OCI-LY7 (cell line): ENCODE measurements at regions of chr5 and their contacts with region 1.

Region 1: DNA sequence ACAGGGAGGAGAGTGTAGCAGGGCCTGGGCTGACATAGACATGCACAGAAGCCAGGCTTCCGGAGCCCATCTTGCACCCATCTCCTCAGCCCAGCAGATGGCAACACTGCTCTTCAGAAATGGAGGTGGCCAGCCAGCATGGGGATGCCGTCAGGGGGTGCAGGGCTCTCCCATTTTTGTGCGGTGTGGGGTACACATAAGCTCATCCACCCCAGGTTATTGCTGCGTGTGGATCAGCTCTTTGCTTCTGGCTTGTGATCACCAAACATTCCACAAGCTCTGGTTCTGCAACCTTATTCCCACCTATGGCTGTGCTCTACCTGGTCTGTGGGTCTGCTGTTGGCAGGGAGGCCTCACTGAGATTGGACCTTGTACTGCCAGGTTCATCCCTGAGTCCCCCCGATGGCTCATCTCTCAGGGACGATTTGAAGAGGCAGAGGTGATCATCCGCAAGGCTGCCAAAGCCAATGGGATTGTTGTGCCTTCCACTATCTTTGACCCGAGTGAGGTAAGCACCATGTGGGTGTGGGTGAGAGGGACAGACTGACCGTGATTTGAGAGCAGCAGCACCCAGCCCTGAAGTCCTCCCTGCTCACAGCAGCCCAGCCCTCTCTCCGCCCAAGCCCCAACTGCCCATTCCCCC is 17.3 kb downstream of the SLC22A5 start:
- DNase-seq: peak; percentile 86
- H3K4me3 ChIP-seq: no peak overlapping the region
- H3K27ac ChIP-seq: no peak overlapping the region
- H3K4me1 ChIP-seq: peaks cover 19% of the 10 kb centered on the region
- CTCF ChIP-seq: peak; percentile 94

Region 2: DNA sequence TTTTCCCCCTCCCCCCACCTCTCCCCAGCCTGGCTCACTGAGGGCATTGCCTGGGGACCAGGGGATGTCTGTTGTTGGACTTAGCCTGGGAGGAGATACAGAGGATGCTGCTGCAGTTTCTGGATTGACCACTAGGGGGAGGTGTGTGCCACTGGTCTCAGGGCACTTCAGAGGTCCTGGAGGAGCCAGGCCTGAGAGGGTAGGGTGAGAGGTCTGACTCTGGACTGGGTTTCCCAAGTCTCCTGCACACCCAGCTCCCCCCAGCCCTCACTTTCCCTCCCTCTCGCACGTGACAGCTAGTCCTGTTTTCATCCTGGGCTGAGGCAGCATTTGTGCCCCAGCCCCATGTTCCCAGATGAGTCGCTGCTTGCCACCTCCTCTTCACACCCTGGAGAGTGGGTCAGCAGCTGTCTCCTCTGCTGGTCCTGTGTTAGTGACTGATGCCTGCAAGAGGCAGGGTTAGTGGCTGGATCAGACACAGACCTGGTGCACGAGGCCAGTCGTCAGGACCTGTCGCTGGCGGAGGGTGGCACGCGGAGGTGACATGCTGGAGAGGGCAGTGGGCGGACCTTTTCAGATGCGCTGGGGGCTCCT is 321.9 kb before region 1 on chr5:
- CTCF ChIA-PET with region 1: no interaction called
- POLR2A ChIA-PET with region 1: no interaction called
- intact Hi-C with region 1: loop called (anchors 1 kb)
- DNase-seq: peak; percentile 80
- H3K4me3 ChIP-seq: no peak overlapping the region
- H3K27ac ChIP-seq: no peak overlapping the region
- H3K4me1 ChIP-seq: no peaks in the 10 kb centered on the region
- CTCF ChIP-seq: peak; percentile 87

Region 3: GRCh38 chr5:132410451-132411381 is 24.0 kb after region 1 on chr5:
- CTCF ChIA-PET with region 1: interaction called, 4 read pairs
- POLR2A ChIA-PET with region 1: interaction called, 7 read pairs
- intact Hi-C with region 1: loop called (anchors 1 kb)
- DNase-seq: peak; percentile 92
- H3K4me3 ChIP-seq: peak overlapping the region; percentile 75
- H3K27ac ChIP-seq: peak overlapping the region; percentile 86
- H3K4me1 ChIP-seq: peaks cover 64% of the 10 kb centered on the region
- CTCF ChIP-seq: peak; percentile 78

Region 4: GRCh38 chr5:132446669-132447068 is 59.9 kb after region 1 on chr5:
- CTCF ChIA-PET with region 1: no interaction called
- POLR2A ChIA-PET with region 1: no interaction called
- intact Hi-C with region 1: no loop called
- DNase-seq: no peak
- H3K4me3 ChIP-seq: no peak overlapping the region
- H3K27ac ChIP-seq: no peak overlapping the region
- H3K4me1 ChIP-seq: peaks cover 9% of the 10 kb centered on the region
- CTCF ChIP-seq: no peak

Region 5: GRCh38 chr5:132653716-132654115 is 267.0 kb after region 1 on chr5:
- CTCF ChIA-PET with region 1: no interaction called
- POLR2A ChIA-PET with region 1: no interaction called
- intact Hi-C with region 1: loop called (anchors 5 kb)
- DNase-seq: no peak
- H3K4me3 ChIP-seq: no peak overlapping the region
- H3K27ac ChIP-seq: no peak overlapping the region
- H3K4me1 ChIP-seq: no peaks in the 10 kb centered on the region
- CTCF ChIP-seq: no peak

Region 6: DNA sequence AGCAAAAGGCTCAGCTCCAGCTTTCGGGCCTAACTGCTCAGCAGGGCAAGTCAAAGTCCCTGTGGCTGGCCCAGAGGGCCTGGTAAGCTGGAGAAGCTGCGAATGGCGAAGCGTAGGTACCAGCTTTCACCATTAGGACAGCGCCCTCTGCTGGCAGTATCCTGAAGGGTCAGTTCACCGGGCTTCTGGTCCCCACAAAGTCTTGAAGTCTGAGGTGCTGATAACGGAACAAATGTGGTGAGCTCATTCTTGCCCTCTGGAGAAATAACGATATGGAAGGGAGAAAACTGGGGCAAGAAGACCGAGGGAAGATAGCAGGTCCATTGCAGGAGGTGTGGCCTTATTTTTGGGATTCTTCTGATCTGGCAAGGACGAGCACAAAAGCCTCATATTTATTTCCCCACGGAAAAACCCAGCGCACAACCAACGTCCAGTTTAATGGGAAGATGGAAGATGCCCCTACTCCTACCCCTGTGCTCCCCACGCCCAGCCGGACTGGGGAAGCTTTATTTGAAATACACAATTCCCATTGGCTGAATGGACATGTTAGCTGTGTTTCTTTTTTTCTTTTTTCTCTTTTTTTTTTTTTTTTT is 433.5 kb after region 1 on chr5:
- CTCF ChIA-PET with region 1: no interaction called
- POLR2A ChIA-PET with region 1: no interaction called
- intact Hi-C with region 1: loop called (anchors 1 kb)
- DNase-seq: peak; percentile 84
- H3K4me3 ChIP-seq: no peak overlapping the region
- H3K27ac ChIP-seq: no peak overlapping the region
- H3K4me1 ChIP-seq: no peaks in the 10 kb centered on the region
- CTCF ChIP-seq: peak; percentile 95